SK-N-SH (cell line): ENCODE measurements at regions of chr11 and their contacts with region 1.

Region 1: GRCh38 chr11:64263021-64263946 is 12.0 kb downstream of the PLCB3 start:
- DNase-seq: peak; percentile 70
- H3K4me3 ChIP-seq: no peak overlapping the region
- H3K27ac ChIP-seq: peak overlapping the region; percentile 29 to 94; a peak in 3 of 4 replicates
- H3K4me1 ChIP-seq: peaks cover 3 to 47% of the 10 kb centered on the region in 2 experiments; a peak in 3 of 4 replicates
- H3K27me3 ChIP-seq: no peaks in the 10 kb centered on the region
- CTCF ChIP-seq: peak; percentile 25; the same call in 1 of the 2 replicates
- EP300 ChIP-seq: no peak
- RAD21 ChIP-seq: no peak

Region 2: GRCh38 chr11:64152841-64153691 is 110.2 kb before region 1 on chr11:
- CTCF ChIA-PET with region 1: no interaction called
- POLR2A ChIA-PET with region 1: no interaction called
- DNase-seq: peak; percentile 95
- H3K4me3 ChIP-seq: peak overlapping the region in 1 of 2 experiments; percentile 42; a peak in 1 of 4 replicates
- H3K27ac ChIP-seq: peak overlapping the region in 1 of 2 experiments; percentile 55; a peak in 1 of 4 replicates
- H3K4me1 ChIP-seq: peaks cover 0 to 55% of the 10 kb centered on the region in 2 experiments; a peak in 2 of 4 replicates
- H3K27me3 ChIP-seq: no peaks in the 10 kb centered on the region
- CTCF ChIP-seq: peak; percentile 99
- EP300 ChIP-seq: no peak
- RAD21 ChIP-seq: peak; percentile 84

Region 3: DNA sequence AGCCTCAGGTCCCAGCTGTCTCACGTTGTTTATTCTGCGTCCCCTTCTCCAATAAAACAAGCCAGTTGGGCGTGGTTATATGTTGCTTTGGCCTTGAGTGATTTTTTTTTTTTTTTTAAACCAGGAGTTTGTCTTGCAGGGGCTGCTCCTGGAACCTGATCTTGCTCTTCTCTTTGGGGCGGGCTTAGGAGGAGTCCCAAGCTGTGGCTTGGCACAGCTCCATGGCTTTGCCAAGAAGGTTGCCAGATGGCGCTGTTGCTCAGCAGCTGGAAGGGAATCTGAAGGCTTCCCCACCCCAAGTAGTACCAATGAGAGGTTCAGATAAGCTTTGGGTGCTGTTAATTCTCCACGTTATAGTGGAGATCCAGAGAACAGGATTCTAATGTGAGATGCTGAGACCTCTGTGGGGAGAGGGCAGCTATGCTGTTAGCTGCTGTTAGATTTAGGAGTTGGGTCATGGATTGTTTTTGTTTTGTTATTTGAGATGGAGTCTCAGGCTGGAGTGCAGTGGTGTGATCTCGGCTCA is 58.8 kb before region 1 on chr11:
- CTCF ChIA-PET with region 1: interaction called, 11 read pairs
- POLR2A ChIA-PET with region 1: interaction called, 3 read pairs
- DNase-seq: peak; percentile 89
- H3K4me3 ChIP-seq: no peak overlapping the region
- H3K27ac ChIP-seq: peak overlapping the region in 1 of 2 experiments; percentile 6; a peak in 1 of 4 replicates
- H3K4me1 ChIP-seq: peaks cover 4 to 27% of the 10 kb centered on the region in 2 experiments; a peak in 3 of 4 replicates
- H3K27me3 ChIP-seq: no peaks in the 10 kb centered on the region
- CTCF ChIP-seq: peak; percentile 85
- EP300 ChIP-seq: no peak
- RAD21 ChIP-seq: peak; percentile 84

Region 4: DNA sequence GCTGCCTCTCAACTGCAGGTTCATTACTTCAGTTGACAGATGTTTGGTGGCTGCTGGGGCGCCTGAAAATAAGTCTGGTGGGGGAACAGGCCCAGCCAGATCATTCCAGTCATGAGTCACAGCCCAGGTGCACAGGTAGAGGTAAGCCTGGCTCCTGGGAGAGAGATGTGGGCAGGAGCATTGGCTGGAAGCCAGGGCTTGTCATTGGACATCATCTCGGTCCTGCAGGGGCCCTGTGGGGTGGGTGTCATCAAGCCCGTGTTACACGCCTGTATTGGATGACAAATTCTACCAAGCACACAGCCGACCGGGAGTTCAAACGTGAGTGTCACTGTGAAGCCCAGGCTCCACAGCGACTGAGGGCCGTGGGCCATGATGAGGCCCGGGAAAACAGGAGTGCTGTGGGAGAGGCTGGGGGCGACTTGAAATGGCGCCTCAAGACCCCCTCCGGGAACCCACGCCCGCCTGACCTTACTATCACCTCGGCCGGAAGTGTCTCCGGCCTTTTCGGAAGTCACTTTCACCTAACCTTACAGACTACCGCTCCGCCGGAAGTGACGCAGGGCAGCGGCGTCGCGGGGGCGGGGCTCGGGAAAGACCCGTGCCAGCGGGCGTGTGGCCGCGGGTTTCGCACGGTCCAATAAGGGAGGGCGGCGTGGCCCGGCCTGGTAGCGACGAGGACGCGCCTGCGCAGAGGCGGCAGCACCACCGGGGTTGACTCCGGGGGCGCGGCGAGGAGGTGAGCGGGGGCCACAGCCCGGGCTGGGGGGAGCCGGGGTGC is 22.7 kb before region 1 on chr11 and contains the start of gene FKBP2:
- CTCF ChIA-PET with region 1: interaction called, 20 read pairs
- POLR2A ChIA-PET with region 1: interaction called, 112 read pairs
- DNase-seq: peak; percentile 97
- H3K4me3 ChIP-seq: peak within 1 kb of the TSS; percentile 78 to 92
- H3K27ac ChIP-seq: peak within 1 kb of the TSS; percentile 94 to 98
- H3K4me1 ChIP-seq: peaks cover 16 to 41% of the 10 kb centered on the region in 2 experiments; a peak in 2 of 4 replicates
- H3K27me3 ChIP-seq: no peaks in the 10 kb centered on the region
- CTCF ChIP-seq: no peak
- EP300 ChIP-seq: no peak
- RAD21 ChIP-seq: no peak
- polyA plus RNA-seq, gene FKBP2: 84.8 and 127 TPM in 2 replicates

Region 5: DNA sequence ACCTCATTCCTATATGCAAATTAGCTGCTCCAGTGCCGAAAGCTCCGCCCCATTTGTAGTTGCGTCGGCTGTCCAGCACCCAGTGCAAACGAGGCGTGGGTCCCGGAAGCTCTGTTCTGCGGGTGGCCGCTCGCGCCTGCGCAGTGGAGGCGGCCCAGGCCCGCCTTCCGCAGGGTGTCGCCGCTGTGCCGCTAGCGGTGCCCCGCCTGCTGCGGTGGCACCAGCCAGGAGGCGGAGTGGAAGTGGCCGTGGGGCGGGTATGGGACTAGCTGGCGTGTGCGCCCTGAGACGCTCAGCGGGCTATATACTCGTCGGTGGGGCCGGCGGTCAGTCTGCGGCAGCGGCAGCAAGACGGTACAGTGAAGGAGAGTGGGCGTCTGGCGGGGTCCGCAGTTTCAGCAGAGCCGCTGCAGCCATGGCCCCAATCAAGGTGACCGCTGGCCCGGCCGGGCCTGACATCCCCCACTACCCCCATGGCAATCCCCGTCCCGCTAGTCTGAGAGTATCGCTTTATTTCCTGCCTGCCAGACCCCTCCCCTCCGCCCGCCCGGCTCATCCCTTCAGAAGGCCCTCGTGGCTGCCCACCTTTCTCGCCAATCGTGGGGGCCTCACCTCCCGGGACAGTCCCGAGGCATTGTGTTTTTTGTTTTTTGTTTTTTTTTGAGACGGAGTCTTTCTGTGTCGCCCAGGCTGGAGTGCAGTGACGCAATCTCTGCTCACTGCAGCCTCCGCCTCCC is 54.8 kb after region 1 on chr11 and contains the start of gene PRDX5:
- CTCF ChIA-PET with region 1: no interaction called
- POLR2A ChIA-PET with region 1: interaction called, 11 read pairs
- DNase-seq: peak; percentile 97
- H3K4me3 ChIP-seq: peak within 1 kb of the TSS; percentile 70 to 98
- H3K27ac ChIP-seq: peak within 1 kb of the TSS; percentile 97 to 100
- H3K4me1 ChIP-seq: peaks cover 0 to 15% of the 10 kb centered on the region in 2 experiments; a peak in 2 of 4 replicates
- H3K27me3 ChIP-seq: no peaks in the 10 kb centered on the region
- CTCF ChIP-seq: peak; percentile 33; the same call in 1 of the 2 replicates
- EP300 ChIP-seq: 0 out of 4 replicates have a peak, but pooled peaks of 1 of the 2 experiments have one; percentile 4
- RAD21 ChIP-seq: peak; percentile 55
- polyA plus RNA-seq, gene PRDX5: 875 and 1,000 TPM in 2 replicates